Endothelial cell of umbilical vein (primary cell): ENCODE measurements at regions of chr1 and their contacts with region 1.

Region 1: DNA sequence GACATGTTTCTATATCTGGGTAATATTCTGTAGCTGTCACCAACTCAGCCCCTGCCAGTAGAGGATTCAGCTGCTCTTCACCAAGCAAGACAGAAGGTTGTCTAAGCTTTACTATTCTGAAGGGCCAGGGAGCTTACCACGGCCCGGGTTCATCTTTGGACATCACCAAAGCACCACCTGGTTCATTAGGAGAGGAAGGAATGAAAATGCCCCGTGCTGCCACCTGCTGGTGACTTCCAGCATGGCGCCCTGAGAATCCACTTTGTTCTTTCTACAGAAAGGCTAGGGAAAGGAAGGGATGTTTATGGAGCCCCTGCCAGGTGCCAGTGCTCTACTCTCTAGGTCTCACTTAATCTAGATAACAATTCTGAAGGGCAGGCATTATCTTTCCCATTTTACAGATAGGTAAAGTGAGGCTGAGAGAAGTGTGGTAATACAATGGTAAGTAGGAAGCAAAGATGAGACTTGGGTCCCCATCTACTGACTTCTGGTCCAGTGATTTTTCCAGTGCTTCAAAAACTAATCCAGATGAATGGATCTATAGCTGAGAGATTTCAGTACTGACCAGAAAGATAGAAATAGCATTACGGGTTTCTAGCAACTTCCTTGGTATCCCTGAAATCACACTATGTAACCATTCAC is 79.5 kb downstream of the BEND5 start:
- DNase-seq: peak; percentile 29
- H3K4me3 ChIP-seq: no peak overlapping the region
- H3K27ac ChIP-seq: no peak overlapping the region
- H3K4me1 ChIP-seq: no peaks in the 10 kb centered on the region
- H3K27me3 ChIP-seq: no peaks in the 10 kb centered on the region
- CTCF ChIP-seq: peak; percentile 81 to 84
- POLR2A ChIP-seq: no peak

Region 2: DNA sequence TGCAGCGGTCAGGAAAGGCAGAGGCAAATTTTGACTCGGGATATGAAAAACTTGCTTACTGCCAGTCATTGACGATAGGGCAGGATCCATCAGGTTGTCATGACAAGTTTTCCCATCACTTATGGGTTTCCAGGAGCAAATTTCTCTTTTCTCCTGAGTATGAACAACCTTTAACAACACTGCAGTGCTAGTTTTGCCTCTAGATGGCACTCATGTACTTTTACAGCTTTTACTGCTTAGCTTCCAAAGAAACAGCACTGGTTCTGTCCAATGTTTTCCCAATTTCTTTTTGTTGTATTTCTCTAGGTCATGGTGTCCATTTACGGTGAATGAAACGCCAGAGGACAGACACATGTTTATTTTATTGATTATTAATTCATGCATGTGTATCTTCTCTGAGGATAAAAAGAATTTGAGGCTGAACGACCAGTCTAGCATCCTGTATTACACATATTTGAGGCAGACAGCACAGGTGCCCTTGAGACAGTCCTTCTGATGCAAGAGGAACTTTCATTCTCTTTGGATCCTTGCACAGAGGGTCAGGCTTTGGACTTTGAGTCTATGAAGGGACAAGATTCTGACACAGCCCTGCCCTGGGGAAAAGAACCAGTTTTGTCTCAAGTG is 587.7 kb before region 1 on chr1:
- CTCF ChIA-PET with region 1: interaction called, 6 read pairs
- POLR2A ChIA-PET with region 1: no interaction called
- dilution Hi-C with region 1: no loop called
- intact Hi-C with region 1: loop called (anchors 10 kb)
- DNase-seq: peak; percentile 55
- H3K4me3 ChIP-seq: no peak overlapping the region
- H3K27ac ChIP-seq: no peak overlapping the region
- H3K4me1 ChIP-seq: no peaks in the 10 kb centered on the region
- H3K27me3 ChIP-seq: no peaks in the 10 kb centered on the region
- CTCF ChIP-seq: peak; percentile 64 to 78
- POLR2A ChIP-seq: no peak

Region 3: DNA sequence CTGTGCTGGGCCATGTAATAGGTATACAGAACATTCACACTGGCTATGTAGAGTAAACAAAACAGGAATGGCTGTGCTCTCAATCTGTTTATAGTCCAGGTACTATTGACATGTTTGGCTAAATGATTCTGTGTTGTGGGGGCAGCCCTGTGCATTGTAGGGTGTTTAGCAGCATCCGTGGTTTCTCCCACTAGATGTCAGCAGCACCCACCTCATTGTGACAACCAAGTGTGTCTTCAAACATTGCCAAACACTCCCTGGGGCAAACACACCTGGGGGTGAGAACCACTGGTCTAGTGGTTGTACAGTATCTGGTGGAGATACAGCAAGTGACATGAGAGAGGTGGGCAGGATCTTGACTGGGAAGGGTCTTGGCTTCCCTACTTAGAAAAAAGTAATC is 144.8 kb before region 1 on chr1:
- CTCF ChIA-PET with region 1: no interaction called
- POLR2A ChIA-PET with region 1: no interaction called
- dilution Hi-C with region 1: no loop called
- intact Hi-C with region 1: loop called (anchors 5 kb)
- DNase-seq: no peak
- H3K4me3 ChIP-seq: no peak overlapping the region
- H3K27ac ChIP-seq: no peak overlapping the region
- H3K4me1 ChIP-seq: no peaks in the 10 kb centered on the region
- H3K27me3 ChIP-seq: no peaks in the 10 kb centered on the region
- CTCF ChIP-seq: no peak
- POLR2A ChIP-seq: no peak

Region 4: DNA sequence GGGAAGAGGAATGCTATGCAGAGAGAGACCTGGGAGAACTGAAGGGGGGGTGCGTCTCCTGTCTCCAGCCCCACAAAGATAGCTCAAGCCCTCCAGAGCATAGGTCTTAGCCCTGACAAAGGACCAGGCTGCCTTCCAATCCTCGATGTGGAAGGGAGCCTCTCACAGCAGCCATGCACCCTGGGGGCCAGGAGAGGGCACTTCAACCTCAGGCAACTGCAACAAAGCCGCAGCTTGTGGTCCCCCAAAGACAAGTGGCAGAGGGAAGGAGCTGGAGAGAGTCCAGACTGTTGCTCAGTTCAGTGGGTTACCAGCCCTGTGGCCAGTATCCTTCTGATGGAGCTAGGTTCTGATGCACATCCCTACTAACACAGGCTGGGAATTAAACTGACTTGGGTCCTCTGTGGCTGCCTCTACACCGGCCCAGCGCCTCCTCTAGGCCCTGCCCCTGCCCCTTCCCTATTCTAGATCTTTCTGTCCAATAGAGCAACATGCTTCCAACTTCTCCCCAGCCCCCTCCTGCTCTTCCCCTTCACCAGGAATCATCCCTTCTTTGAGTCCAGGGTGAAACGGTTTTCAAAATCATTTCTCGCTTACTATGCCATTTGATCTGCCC is 124.4 kb before region 1 on chr1:
- CTCF ChIA-PET with region 1: no interaction called
- POLR2A ChIA-PET with region 1: no interaction called
- dilution Hi-C with region 1: no loop called
- intact Hi-C with region 1: loop called (anchors 1 kb)
- DNase-seq: peak; percentile 7
- H3K4me3 ChIP-seq: no peak overlapping the region
- H3K27ac ChIP-seq: no peak overlapping the region
- H3K4me1 ChIP-seq: no peaks in the 10 kb centered on the region
- H3K27me3 ChIP-seq: no peaks in the 10 kb centered on the region
- CTCF ChIP-seq: peak in 1 of 2 donors; percentile 29
- POLR2A ChIP-seq: no peak